ENCODE measurements at regions of chr13 and their contacts with region 1.

Region 1: DNA sequence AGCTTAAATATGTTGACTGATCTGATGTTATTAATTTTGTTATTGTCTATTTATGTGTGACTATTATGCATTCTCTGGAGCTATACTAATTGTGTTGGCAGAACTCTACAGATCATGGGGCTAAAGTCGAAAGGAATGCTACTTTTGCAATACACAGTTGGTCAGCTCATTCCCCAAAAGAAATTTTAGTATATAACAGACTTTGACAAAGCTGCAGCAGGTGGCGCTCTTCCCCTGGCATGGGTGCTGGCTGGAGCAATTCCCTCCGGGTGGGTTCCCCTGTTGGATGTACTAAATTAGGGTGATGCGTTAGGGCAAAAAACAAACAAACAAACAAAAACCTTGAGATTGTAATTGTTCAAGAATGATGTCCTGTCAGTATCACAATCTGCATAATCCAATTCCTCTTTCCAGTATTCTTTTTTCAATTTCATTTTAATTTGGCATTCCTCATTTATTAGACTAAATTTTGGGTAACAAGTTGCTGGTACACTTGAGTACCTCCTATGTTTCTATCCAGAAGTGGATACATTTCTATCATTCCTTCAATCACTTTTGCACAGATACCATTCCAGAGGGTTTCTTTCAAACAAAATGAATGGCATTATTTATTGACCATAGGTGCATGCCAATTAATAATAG is 322.8 kb upstream of the EDNRB start:
- DNase-seq: no peak
- H3K4me3 ChIP-seq: no peak overlapping the region
- CTCF ChIP-seq: no peak
- POLR2A ChIP-seq: no peak

Region 2: GRCh38 chr13:79108914-79109643 is 867.7 kb after region 1 on chr13:
- intact Hi-C with region 1: loop called (anchors 5 kb)
- DNase-seq: no peak
- H3K4me3 ChIP-seq: no peak overlapping the region
- CTCF ChIP-seq: no peak
- POLR2A ChIP-seq: no peak